Ascending aorta (tissue), 2 donors: ENCODE measurements at regions of chr9 and their contacts with region 1.

Region 1: GRCh38 chr9:114587385-114588202 is at the start of gene ATP6V1G1:
- DNase-seq: peak; percentile 98 to 100
- H3K4me3 ChIP-seq: peak within 1 kb of the TSS; percentile 79 to 85
- H3K27ac ChIP-seq: peak within 1 kb of the TSS; percentile 78 to 84
- H3K4me1 ChIP-seq: peaks cover 5 to 40% of the 10 kb centered on the region in 2 donors
- H3K27me3 ChIP-seq: no peaks in the 10 kb centered on the region
- CTCF ChIP-seq: no peak
- total RNA-seq, gene ATP6V1G1: 135 TPM

Region 2: GRCh38 chr9:114033397-114034103 is 554.0 kb before region 1 on chr9:
- intact Hi-C with region 1: no loop called
- DNase-seq: peak in 1 of 2 donors; percentile 64
- H3K4me3 ChIP-seq: no peak overlapping the region
- H3K27ac ChIP-seq: no peak overlapping the region
- H3K4me1 ChIP-seq: peaks cover 0 to 13% of the 10 kb centered on the region in 2 donors
- H3K27me3 ChIP-seq: no peaks in the 10 kb centered on the region
- CTCF ChIP-seq: peak; percentile 40 to 59 (median 52)

Region 3: GRCh38 chr9:114348906-114349482 is 238.6 kb before region 1 on chr9:
- intact Hi-C with region 1: loop called (anchors 10 kb)
- DNase-seq: peak; percentile 89 to 93
- H3K4me3 ChIP-seq: no peak overlapping the region
- H3K27ac ChIP-seq: peak overlapping the region; percentile 70 to 77
- H3K4me1 ChIP-seq: peaks cover 0 to 21% of the 10 kb centered on the region in 2 donors
- H3K27me3 ChIP-seq: no peaks in the 10 kb centered on the region
- CTCF ChIP-seq: no peak

Region 4: DNA sequence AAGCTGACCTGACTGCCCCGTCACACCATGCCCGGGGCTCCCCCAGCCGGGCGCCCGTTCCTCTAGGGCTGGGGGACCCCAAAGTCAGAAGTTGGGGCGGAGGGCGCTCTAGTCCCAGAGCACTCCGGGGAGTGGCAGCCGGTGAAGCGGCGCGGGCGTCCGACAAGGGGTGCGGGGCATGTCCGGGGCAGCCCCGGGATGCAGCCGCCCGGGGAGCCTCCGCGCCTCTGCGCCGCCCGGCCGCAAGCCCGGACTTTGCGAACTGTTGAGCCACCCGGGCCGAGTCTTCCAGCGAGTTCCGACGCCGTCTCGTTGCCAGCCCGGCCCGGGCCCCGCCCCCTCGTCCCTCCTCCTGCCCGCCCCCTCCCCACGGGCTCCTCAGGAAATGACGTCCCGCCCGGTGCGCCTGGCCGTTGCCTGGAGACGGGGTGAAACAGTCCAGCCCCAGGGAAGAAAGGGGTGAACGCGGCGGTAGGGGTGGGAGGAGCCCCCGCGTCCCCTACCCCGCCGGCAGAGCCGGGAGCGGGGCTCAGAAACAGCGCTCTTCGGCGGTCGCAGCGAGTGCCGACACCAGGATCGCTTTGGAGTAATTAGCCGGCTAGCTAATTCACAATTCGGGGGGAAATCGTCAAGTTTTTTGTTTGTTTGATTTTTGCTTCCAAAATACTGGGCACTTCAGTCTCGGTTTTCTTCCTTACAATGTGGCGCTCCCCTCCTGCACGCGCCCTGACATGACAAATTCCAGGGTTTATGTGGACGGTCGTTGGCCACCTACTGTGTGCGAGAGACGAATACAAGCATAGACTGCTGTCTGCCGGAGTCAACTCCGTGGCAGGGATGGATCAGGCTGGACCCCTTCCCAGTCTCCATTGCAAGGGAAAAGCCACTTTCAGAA is 82.2 kb before region 1 on chr9 and contains the start of gene WHRN:
- intact Hi-C with region 1: loop called (anchors 2 kb)
- DNase-seq: peak; percentile 73 to 93
- H3K4me3 ChIP-seq: peak within 1 kb of the TSS; percentile 54 to 64
- H3K27ac ChIP-seq: no peak within 1 kb of the TSS
- H3K4me1 ChIP-seq: peaks cover 0 to 5% of the 10 kb centered on the region in 2 donors
- H3K27me3 ChIP-seq: no peaks in the 10 kb centered on the region
- CTCF ChIP-seq: no peak
- total RNA-seq, gene WHRN: 3.9 TPM

Region 5: GRCh38 chr9:114611516-114612271 is 24.1 kb after region 1 on chr9:
- intact Hi-C with region 1: loop called (anchors 1 kb)
- DNase-seq: peak in 1 of 2 donors; percentile 74
- H3K4me3 ChIP-seq: peak overlapping the region; percentile 67 to 94
- H3K27ac ChIP-seq: peak overlapping the region; percentile 82 to 97
- H3K4me1 ChIP-seq: peaks cover 4 to 17% of the 10 kb centered on the region in 2 donors
- H3K27me3 ChIP-seq: no peaks in the 10 kb centered on the region
- CTCF ChIP-seq: no peak